ENCODE measurements at regions of chr2 and their contacts with region 1.

Region 1: DNA sequence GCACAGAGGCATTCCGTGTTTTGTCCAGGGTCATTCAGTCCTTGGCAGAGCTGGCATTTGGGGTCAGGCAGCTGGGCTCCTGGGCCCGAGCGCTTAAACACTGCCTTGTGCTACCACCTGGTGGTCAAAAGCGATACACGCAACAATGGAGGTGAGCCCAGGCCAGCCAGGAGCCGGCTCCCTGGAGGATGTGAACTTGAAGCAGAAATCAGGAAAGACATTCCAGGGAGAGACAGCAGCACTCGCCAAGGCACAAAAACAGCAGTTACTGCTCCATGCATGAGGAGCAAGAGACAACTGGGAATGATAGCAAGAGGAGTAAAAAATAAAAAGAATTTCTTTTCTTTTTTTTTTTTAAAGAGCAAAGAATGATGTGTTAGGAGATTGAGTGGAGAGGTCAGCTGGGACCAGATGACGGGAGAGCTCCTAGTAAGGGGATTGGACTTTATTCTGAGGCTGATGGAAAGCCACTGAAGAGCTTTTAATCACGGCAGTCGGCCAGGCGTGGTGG is 20.7 kb downstream of the SCYGR8 start:
- DNase-seq: peak; percentile 77 to 83 (median 81)
- ATAC-seq: peak; percentile 94 to 100 (median 100)
- H3K4me3 ChIP-seq: no peak overlapping the region
- H3K27ac ChIP-seq: no peak overlapping the region
- H3K4me1 ChIP-seq: peaks cover 0 to 5% (median 2%) of the 10 kb centered on the region in 4 donors
- H3K27me3 ChIP-seq: no peaks in the 10 kb centered on the region
- CTCF ChIP-seq: peak; percentile 83 to 94 (median 90)
- POLR2A ChIP-seq: no peak

Region 2: DNA sequence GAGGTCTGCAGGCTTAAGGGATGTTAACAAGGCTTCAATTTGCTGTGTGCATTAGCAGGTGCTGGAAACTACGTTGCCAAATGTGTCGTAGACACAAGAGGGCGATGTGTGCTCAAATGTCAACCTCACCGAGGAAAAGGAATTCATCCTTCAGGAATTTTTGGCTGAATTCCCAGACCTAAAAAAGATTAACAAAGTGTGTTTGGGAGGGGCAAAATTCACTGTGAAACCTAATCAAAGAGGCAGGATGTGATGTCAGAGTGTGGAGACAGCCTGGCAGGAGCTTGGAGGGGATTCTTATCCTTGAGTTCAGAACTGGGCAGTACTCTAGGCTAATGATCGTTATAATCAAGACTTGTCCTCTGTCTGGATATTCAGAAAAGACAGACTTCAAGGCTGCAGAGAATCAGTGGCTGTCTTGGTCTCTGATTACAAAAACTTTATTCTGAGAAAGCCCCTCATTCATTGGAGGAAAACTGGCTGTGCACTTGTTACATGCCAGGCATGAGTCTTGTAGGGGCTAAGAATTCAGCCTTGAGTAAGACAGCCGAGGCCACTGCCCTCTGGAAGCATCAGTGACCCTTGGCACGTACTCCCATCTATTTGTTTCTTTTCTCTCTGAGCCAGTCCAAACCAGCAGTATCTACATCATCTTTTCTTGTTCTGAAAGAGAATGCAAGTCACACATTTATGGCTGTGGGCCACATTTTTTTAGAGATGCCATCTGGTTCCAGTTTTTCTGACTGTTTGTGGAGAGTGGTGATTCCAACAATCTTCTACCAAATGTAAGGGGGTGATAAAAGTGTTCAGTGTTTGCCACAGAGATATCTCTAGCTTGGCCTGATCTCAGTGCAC is 360.0 kb before region 1 on chr2:
- intact Hi-C with region 1: loop called in 1 of 2 experiments (anchors 10 kb)
- DNase-seq: peak in 2 of 3 donors; percentile 46 to 77
- ATAC-seq: peak; percentile 85 to 94 (median 94)
- H3K4me3 ChIP-seq: no peak overlapping the region
- H3K27ac ChIP-seq: peak overlapping the region; percentile 16 to 76 (median 60)
- H3K4me1 ChIP-seq: peaks cover 0 to 13% (median 5%) of the 10 kb centered on the region in 4 donors
- H3K27me3 ChIP-seq: no peaks in the 10 kb centered on the region
- CTCF ChIP-seq: peak; percentile 73 to 79 (median 78)
- POLR2A ChIP-seq: peak; percentile 58

Region 3: GRCh38 chr2:227661019-227661649 is 105.3 kb before region 1 on chr2:
- intact Hi-C with region 1: loop called in 1 of 2 experiments (anchors 5 kb)
- DNase-seq: no peak
- ATAC-seq: no peak
- H3K4me3 ChIP-seq: no peak overlapping the region
- H3K27ac ChIP-seq: no peak overlapping the region
- H3K4me1 ChIP-seq: no peaks in the 10 kb centered on the region
- H3K27me3 ChIP-seq: no peaks in the 10 kb centered on the region
- CTCF ChIP-seq: no peak
- POLR2A ChIP-seq: no peak